ENCODE measurements at regions of chr16 and their contacts with region 1.

Region 1: GRCh38 chr16:74862741-74863244 is 88.2 kb upstream of the FA2H start:
- DNase-seq: no peak
- H3K4me3 ChIP-seq: no peak overlapping the region
- H3K27ac ChIP-seq: no peak overlapping the region
- H3K4me1 ChIP-seq: peaks cover 6 to 17% (median 10%) of the 10 kb centered on the region in 4 experiments; a peak in 5 of 7 replicates
- H3K27me3 ChIP-seq: no peaks in the 10 kb centered on the region
- CTCF ChIP-seq: peak in 2 of 3 experiments; percentile 67 to 79; a peak in 3 of 4 replicates
- EP300 ChIP-seq: no peak
- POLR2A ChIP-seq: no peak
- RAD21 ChIP-seq: peak; percentile 90 to 91

Region 2: GRCh38 chr16:74695450-74696422 is 167.1 kb before region 1 on chr16:
- CTCF ChIA-PET with region 1: interaction called, 11 read pairs
- POLR2A ChIA-PET with region 1: interaction called, 3 read pairs
- DNase-seq: peak; percentile 41 to 80
- H3K4me3 ChIP-seq: peak overlapping the region; percentile 23 to 56 (median 34); a peak in 5 of 8 replicates
- H3K27ac ChIP-seq: no peak overlapping the region
- H3K4me1 ChIP-seq: peaks cover 0 to 3% (median 2%) of the 10 kb centered on the region in 4 experiments; a peak in 4 of 7 replicates
- H3K27me3 ChIP-seq: peaks cover 0 to 8% (median 3%) of the 10 kb centered on the region in 4 experiments; a peak in 3 of 7 replicates
- CTCF ChIP-seq: no peak
- EP300 ChIP-seq: no peak
- POLR2A ChIP-seq: peak in 1 of 2 experiments; percentile 60; a peak in 1 of 3 replicates
- RAD21 ChIP-seq: no peak

Region 3: DNA sequence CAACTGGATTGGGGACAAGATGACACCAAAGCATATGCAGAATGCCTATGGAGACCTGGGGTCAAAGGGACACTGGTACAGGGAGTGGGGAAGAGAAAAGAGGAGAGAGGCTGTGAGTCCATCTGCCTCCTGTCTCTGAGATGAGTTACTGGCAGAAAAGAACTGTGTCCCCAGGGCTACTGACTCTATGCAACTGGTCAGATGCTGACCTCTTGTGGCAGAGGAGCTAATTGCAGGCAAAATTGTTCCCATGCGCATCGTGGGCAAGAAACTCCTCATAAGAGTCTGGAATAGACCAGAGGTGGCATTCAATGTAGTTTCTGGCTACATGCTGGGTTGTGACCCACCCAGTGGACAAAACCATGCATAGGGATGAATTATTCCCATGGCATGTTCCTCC is 136.1 kb before region 1 on chr16:
- CTCF ChIA-PET with region 1: interaction called, 53 read pairs
- POLR2A ChIA-PET with region 1: interaction called, 3 read pairs
- DNase-seq: peak; percentile 58 to 86
- H3K4me3 ChIP-seq: no peak overlapping the region
- H3K27ac ChIP-seq: no peak overlapping the region
- H3K4me1 ChIP-seq: peaks cover 2 to 10% (median 5%) of the 10 kb centered on the region in 4 experiments; a peak in 5 of 7 replicates
- H3K27me3 ChIP-seq: 0 out of 7 replicates have a peak, but pooled peaks cover 0 to 2% (median 0%) of the 10 kb centered on the region in 4 experiments
- CTCF ChIP-seq: peak; percentile 59 to 91 (median 83)
- EP300 ChIP-seq: no peak
- POLR2A ChIP-seq: no peak
- RAD21 ChIP-seq: peak; percentile 77 to 82

Region 4: GRCh38 chr16:74774203-74775116 is 88.3 kb before region 1 on chr16 and contains the start of gene FA2H:
- CTCF ChIA-PET with region 1: interaction called, 23 read pairs
- POLR2A ChIA-PET with region 1: no interaction called
- DNase-seq: peak; percentile 58 to 90
- H3K4me3 ChIP-seq: peak within 1 kb of the TSS; percentile 47 to 64 (median 54)
- H3K27ac ChIP-seq: no peak within 1 kb of the TSS
- H3K4me1 ChIP-seq: peaks cover 0 to 6% (median 2%) of the 10 kb centered on the region in 4 experiments; a peak in 1 of 7 replicates
- H3K27me3 ChIP-seq: peaks cover 0 to 21% (median 16%) of the 10 kb centered on the region in 4 experiments; a peak in 6 of 7 replicates
- CTCF ChIP-seq: peak; percentile 22 to 48 (median 40)
- EP300 ChIP-seq: 0 out of 3 replicates have a peak, but pooled peaks of 1 of the 2 experiments have one; percentile 37
- POLR2A ChIP-seq: no peak
- RAD21 ChIP-seq: peak in 1 of 2 experiments; percentile 30; a peak in 1 of 4 replicates
- total RNA-seq, gene FA2H: 1.6 and 2.1 TPM in 2 replicates

Region 5: GRCh38 chr16:74825941-74826542 is 36.8 kb before region 1 on chr16:
- CTCF ChIA-PET with region 1: interaction called, 13 read pairs
- POLR2A ChIA-PET with region 1: no interaction called
- DNase-seq: no peak
- H3K4me3 ChIP-seq: no peak overlapping the region
- H3K27ac ChIP-seq: no peak overlapping the region
- H3K4me1 ChIP-seq: peaks cover 0 to 2% (median 0%) of the 10 kb centered on the region in 4 experiments; a peak in 2 of 7 replicates
- H3K27me3 ChIP-seq: no peaks in the 10 kb centered on the region
- CTCF ChIP-seq: no peak
- EP300 ChIP-seq: no peak
- POLR2A ChIP-seq: no peak
- RAD21 ChIP-seq: no peak

Region 6: DNA sequence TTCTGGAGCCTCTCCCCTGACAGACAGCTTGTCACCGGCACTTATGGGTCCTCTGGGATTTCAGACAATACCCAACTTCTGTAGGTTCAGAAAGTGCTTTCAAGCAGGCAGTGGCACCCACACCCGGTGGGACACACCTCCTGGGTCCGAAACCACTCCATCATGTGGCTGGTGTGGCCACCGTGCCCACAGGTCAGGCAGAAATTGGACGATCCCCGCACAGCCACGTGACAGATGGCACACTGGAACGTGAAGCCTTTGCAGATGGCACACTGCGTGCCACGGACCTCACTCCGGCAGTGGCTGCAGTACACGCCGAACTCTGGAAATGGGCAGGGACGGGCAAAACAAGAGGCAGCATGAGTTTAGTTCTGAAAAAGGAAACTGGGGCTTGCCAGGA is 11.3 kb after region 1 on chr16:
- CTCF ChIA-PET with region 1: interaction called, 10 read pairs
- POLR2A ChIA-PET with region 1: interaction called, 4 read pairs
- DNase-seq: no peak
- H3K4me3 ChIP-seq: no peak overlapping the region
- H3K27ac ChIP-seq: no peak overlapping the region; the same call in 1 of the 2 replicates
- H3K4me1 ChIP-seq: peaks cover 2 to 15% (median 11%) of the 10 kb centered on the region in 4 experiments; a peak in 6 of 7 replicates
- H3K27me3 ChIP-seq: no peaks in the 10 kb centered on the region
- CTCF ChIP-seq: no peak
- EP300 ChIP-seq: no peak
- POLR2A ChIP-seq: no peak
- RAD21 ChIP-seq: no peak

Measured in H1 (cell line).